Left ventricle myocardium inferior (tissue), 1 donor: ENCODE measurements at regions of chr1 and their contacts with region 1.

Region 1: DNA sequence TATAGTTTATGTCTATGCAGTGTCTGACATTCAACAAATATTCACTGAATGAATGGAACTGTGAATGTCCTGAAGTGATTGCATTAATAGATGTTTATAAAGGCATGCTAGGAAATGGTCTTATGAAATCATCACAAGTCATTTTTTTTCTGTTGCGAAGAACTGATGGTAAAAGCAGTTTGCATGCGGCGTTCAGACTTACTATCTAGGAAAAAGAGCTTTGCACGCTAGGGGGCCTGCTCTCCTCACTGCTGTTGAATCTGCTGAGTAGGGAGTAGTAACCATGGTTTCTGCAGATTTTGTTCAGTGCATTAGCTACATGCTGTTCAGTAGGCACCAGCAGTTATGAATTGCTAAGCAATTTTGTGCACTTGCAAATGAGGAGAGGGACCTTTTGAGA is 57.9 kb downstream of the CENPF start:
- DNase-seq: no peak
- H3K4me3 ChIP-seq: no peak overlapping the region
- H3K27ac ChIP-seq: no peak overlapping the region
- H3K4me1 ChIP-seq: no peaks in the 10 kb centered on the region
- H3K27me3 ChIP-seq: no peaks in the 10 kb centered on the region
- CTCF ChIP-seq: peak; percentile 50

Region 2: GRCh38 chr1:214957330-214958137 is 296.7 kb after region 1 on chr1:
- intact Hi-C with region 1: no loop called
- DNase-seq: no peak
- H3K4me3 ChIP-seq: no peak overlapping the region
- H3K27ac ChIP-seq: no peak overlapping the region
- H3K4me1 ChIP-seq: no peaks in the 10 kb centered on the region
- H3K27me3 ChIP-seq: no peaks in the 10 kb centered on the region
- CTCF ChIP-seq: no peak

Region 3: GRCh38 chr1:215526553-215527151 is 865.8 kb after region 1 on chr1:
- intact Hi-C with region 1: loop called (anchors 10 kb)
- DNase-seq: no peak
- H3K4me3 ChIP-seq: no peak overlapping the region
- H3K27ac ChIP-seq: no peak overlapping the region
- H3K4me1 ChIP-seq: no peaks in the 10 kb centered on the region
- H3K27me3 ChIP-seq: no peaks in the 10 kb centered on the region
- CTCF ChIP-seq: peak; percentile 75